Upper lobe of right lung (tissue), 1 donor: ENCODE measurements at regions of chr3 and their contacts with region 1.

Region 1: DNA sequence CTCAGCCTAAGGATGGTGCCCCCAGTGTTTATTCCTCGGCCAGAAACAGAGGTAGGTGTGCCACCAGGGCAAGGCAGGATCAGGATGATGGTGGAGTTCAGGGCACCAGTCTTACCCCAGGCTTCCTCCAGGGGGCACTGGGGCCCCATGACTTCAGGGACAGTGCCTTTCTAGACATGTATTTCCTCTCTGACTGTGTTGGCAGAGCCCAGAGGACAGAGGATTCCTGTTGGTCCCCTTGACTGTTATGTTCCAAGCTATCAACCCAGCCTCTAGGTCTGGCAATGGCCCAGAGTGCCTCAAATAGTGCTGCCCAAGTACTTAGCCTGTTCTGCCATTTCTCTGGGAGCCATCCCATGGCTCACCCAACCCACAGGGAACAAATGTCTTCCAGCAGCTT is 2.8 kb downstream of the HEMK1 start:
- DNase-seq: peak; percentile 87
- ATAC-seq: peak; percentile 66
- H3K4me3 ChIP-seq: no peak overlapping the region
- H3K27ac ChIP-seq: peak overlapping the region; percentile 42
- H3K4me1 ChIP-seq: peaks cover 37% of the 10 kb centered on the region
- H3K27me3 ChIP-seq: no peaks in the 10 kb centered on the region
- CTCF ChIP-seq: peak; percentile 95

Region 2: GRCh38 chr3:50388016-50388719 is 184.0 kb before region 1 on chr3:
- intact Hi-C with region 1: no loop called
- DNase-seq: no peak
- ATAC-seq: no peak
- H3K4me3 ChIP-seq: no peak overlapping the region
- H3K27ac ChIP-seq: no peak overlapping the region
- H3K4me1 ChIP-seq: peaks cover 8% of the 10 kb centered on the region
- H3K27me3 ChIP-seq: no peaks in the 10 kb centered on the region
- CTCF ChIP-seq: no peak

Region 3: GRCh38 chr3:50611464-50612233 is 39.5 kb after region 1 on chr3 and contains the start of gene CISH:
- intact Hi-C with region 1: loop called (anchors 2 kb)
- DNase-seq: peak; percentile 99
- ATAC-seq: peak; percentile 81
- H3K4me3 ChIP-seq: peak within 1 kb of the TSS; percentile 83
- H3K27ac ChIP-seq: peak within 1 kb of the TSS; percentile 91
- H3K4me1 ChIP-seq: peaks cover 61% of the 10 kb centered on the region
- H3K27me3 ChIP-seq: no peaks in the 10 kb centered on the region
- CTCF ChIP-seq: peak; percentile 77
- total RNA-seq, gene CISH: 71.6 TPM

Region 4: GRCh38 chr3:50737908-50738598 is 165.9 kb after region 1 on chr3:
- intact Hi-C with region 1: no loop called
- DNase-seq: no peak
- ATAC-seq: no peak
- H3K4me3 ChIP-seq: no peak overlapping the region
- H3K27ac ChIP-seq: no peak overlapping the region
- H3K4me1 ChIP-seq: no peaks in the 10 kb centered on the region
- H3K27me3 ChIP-seq: no peaks in the 10 kb centered on the region
- CTCF ChIP-seq: no peak